Mammary epithelial cell (primary cell): ENCODE measurements at regions of chr5 and their contacts with region 1.

Region 1: GRCh38 chr5:171907725-171908343 is 98.6 kb downstream of the FBXW11 start:
- DNase-seq: peak; percentile 48
- H3K4me3 ChIP-seq: no peak overlapping the region
- H3K27ac ChIP-seq: no peak overlapping the region
- H3K4me1 ChIP-seq: no peaks in the 10 kb centered on the region
- H3K27me3 ChIP-seq: no peaks in the 10 kb centered on the region
- CTCF ChIP-seq: peak; percentile 68 to 83

Region 2: GRCh38 chr5:171418316-171418981 is 489.4 kb before region 1 on chr5:
- CTCF ChIA-PET with region 1: no interaction called
- dilution Hi-C with region 1: no loop called
- in situ Hi-C with region 1: loop called (anchors 10 kb)
- intact Hi-C with region 1: loop called (anchors 1 kb)
- DNase-seq: peak; percentile 70
- H3K4me3 ChIP-seq: peak overlapping the region in 1 of 3 experiments; percentile 31
- H3K27ac ChIP-seq: no peak overlapping the region
- H3K4me1 ChIP-seq: peaks cover 15% of the 10 kb centered on the region
- H3K27me3 ChIP-seq: peaks cover 8% of the 10 kb centered on the region
- CTCF ChIP-seq: peak; percentile 77 to 89

Region 3: GRCh38 chr5:171424726-171425125 is 483.1 kb before region 1 on chr5:
- CTCF ChIA-PET with region 1: no interaction called
- dilution Hi-C with region 1: no loop called
- in situ Hi-C with region 1: loop called (anchors 10 kb)
- intact Hi-C with region 1: loop called (anchors 1 kb)
- DNase-seq: no peak
- H3K4me3 ChIP-seq: no peak overlapping the region
- H3K27ac ChIP-seq: no peak overlapping the region
- H3K4me1 ChIP-seq: peaks cover 6% of the 10 kb centered on the region
- H3K27me3 ChIP-seq: peaks cover 8% of the 10 kb centered on the region
- CTCF ChIP-seq: no peak

Region 4: GRCh38 chr5:171484460-171484899 is 423.4 kb before region 1 on chr5:
- CTCF ChIA-PET with region 1: no interaction called
- dilution Hi-C with region 1: no loop called
- in situ Hi-C with region 1: no loop called
- intact Hi-C with region 1: loop called (anchors 1 kb)
- DNase-seq: no peak
- H3K4me3 ChIP-seq: no peak overlapping the region
- H3K27ac ChIP-seq: no peak overlapping the region
- H3K4me1 ChIP-seq: no peaks in the 10 kb centered on the region
- H3K27me3 ChIP-seq: no peaks in the 10 kb centered on the region
- CTCF ChIP-seq: peak; percentile 60 to 70

Region 5: GRCh38 chr5:171850324-171851285 is 57.2 kb before region 1 on chr5:
- CTCF ChIA-PET with region 1: no interaction called
- dilution Hi-C with region 1: no loop called
- in situ Hi-C with region 1: no loop called
- intact Hi-C with region 1: loop called (anchors 1 kb)
- DNase-seq: no peak
- H3K4me3 ChIP-seq: no peak overlapping the region
- H3K27ac ChIP-seq: no peak overlapping the region
- H3K4me1 ChIP-seq: peaks cover 9% of the 10 kb centered on the region
- H3K27me3 ChIP-seq: no peaks in the 10 kb centered on the region
- CTCF ChIP-seq: peak; percentile 24 to 50

Region 6: DNA sequence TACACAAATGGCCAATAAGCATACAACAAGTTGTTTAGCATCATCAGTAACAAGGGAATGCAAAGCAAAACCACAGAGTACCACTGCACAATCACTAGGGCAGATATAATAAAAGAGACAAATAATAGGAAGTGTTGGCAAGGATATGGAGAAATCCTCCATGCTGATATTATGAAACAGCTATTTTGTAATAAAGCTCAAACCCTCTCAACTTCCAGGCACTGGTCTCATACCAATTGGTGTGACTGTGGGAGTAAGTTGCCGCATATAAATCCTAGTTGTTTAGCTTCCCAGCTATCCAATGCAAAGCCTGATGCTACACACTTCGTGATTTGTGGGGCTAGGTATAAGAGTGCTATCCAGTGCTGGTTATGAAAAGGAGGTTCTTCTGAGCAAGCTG is 33.6 kb before region 1 on chr5:
- CTCF ChIA-PET with region 1: no interaction called
- dilution Hi-C with region 1: no loop called
- in situ Hi-C with region 1: no loop called
- intact Hi-C with region 1: no loop called
- DNase-seq: no peak
- H3K4me3 ChIP-seq: no peak overlapping the region
- H3K27ac ChIP-seq: no peak overlapping the region
- H3K4me1 ChIP-seq: no peaks in the 10 kb centered on the region
- H3K27me3 ChIP-seq: no peaks in the 10 kb centered on the region
- CTCF ChIP-seq: no peak

Region 7: GRCh38 chr5:172006321-172007174 is 98.7 kb after region 1 on chr5 and contains the start of gene FBXW11:
- CTCF ChIA-PET with region 1: interaction called, 6 read pairs
- dilution Hi-C with region 1: no loop called
- in situ Hi-C with region 1: no loop called
- intact Hi-C with region 1: loop called (anchors 1 kb)
- DNase-seq: peak; percentile 97
- H3K4me3 ChIP-seq: peak within 1 kb of the TSS; percentile 73 to 98 (median 77)
- H3K27ac ChIP-seq: peak within 1 kb of the TSS; percentile 88
- H3K4me1 ChIP-seq: peaks cover 54% of the 10 kb centered on the region
- H3K27me3 ChIP-seq: no peaks in the 10 kb centered on the region
- CTCF ChIP-seq: no peak
- total RNA-seq, gene FBXW11: 39.2 to 62.0 TPM

Region 8: DNA sequence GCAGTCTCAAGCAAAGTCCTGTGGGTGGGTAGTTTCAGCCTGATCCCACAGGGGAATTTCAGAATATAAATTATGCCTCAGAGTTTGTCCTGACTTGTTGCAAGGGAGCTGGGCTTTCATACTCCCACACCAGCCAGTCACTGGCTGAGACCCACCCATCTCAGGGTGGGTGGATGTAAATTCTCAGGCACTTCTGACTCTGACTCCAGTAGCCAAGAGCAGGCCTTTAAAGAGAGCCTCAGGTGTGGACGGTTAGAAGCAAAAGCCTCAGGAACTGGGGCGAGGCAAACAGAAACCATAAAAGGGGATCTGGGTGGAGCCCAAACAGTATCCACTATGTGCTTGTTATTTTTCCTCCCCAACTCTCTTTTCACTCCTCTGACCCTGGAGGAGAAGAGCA is 127.2 kb after region 1 on chr5:
- CTCF ChIA-PET with region 1: no interaction called
- dilution Hi-C with region 1: no loop called
- in situ Hi-C with region 1: loop called (anchors 5 to 10 kb)
- intact Hi-C with region 1: loop called (anchors 1 kb)
- DNase-seq: peak; percentile 83
- H3K4me3 ChIP-seq: no peak overlapping the region
- H3K27ac ChIP-seq: no peak overlapping the region
- H3K4me1 ChIP-seq: peaks cover 10% of the 10 kb centered on the region
- H3K27me3 ChIP-seq: no peaks in the 10 kb centered on the region
- CTCF ChIP-seq: no peak